Right cardiac atrium (tissue), 5 donors: ENCODE measurements at regions of chr11 and their contacts with region 1.

Region 1: GRCh38 chr11:8807544-8808225 is 103.3 kb upstream of the AKIP1 start:
- DNase-seq: peak; percentile 62 to 79 (median 72)
- ATAC-seq: peak; percentile 63 to 67
- H3K4me3 ChIP-seq: peak overlapping the region; percentile 73
- H3K27ac ChIP-seq: peak overlapping the region; percentile 83
- H3K4me1 ChIP-seq: peaks cover 26% of the 10 kb centered on the region
- H3K27me3 ChIP-seq: no peaks in the 10 kb centered on the region

Region 2: GRCh38 chr11:8709002-8709672 is 98.5 kb before region 1 on chr11:
- intact Hi-C with region 1: loop called in 1 of 4 experiments (anchors 10 kb)
- DNase-seq: peak; percentile 94 to 97 (median 97)
- ATAC-seq: peak; percentile 79 to 86
- H3K4me3 ChIP-seq: no peak overlapping the region
- H3K27ac ChIP-seq: peak overlapping the region; percentile 83
- H3K4me1 ChIP-seq: peaks cover 17% of the 10 kb centered on the region
- H3K27me3 ChIP-seq: no peaks in the 10 kb centered on the region